ENCODE measurements at regions of chr1 and their contacts with region 1.

Region 1: GRCh38 chr1:2586154-2587070 is at the start of gene PRXL2B:
- DNase-seq: peak; percentile 99
- H3K4me3 Mint-ChIP-seq: peak within 1 kb of the TSS; percentile 83
- H3K27ac Mint-ChIP-seq: peak within 1 kb of the TSS; percentile 92
- H3K4me1 Mint-ChIP-seq: peaks cover 39% of the 10 kb centered on the region
- H3K27me3 Mint-ChIP-seq: no peaks in the 10 kb centered on the region
- total RNA-seq, gene PRXL2B: 28.2 to 34.6 TPM

Region 2: GRCh38 chr1:2412519-2413233 is 173.7 kb before region 1 on chr1 and contains the start of gene PEX10:
- CTCF ChIA-PET with region 1: interaction called, 5 read pairs
- POLR2A ChIA-PET with region 1: interaction called, 7 read pairs
- intact Hi-C with region 1: loop called (anchors 2 kb)
- DNase-seq: peak; percentile 99
- H3K4me3 Mint-ChIP-seq: peak within 1 kb of the TSS; percentile 88
- H3K27ac Mint-ChIP-seq: peak within 1 kb of the TSS; percentile 82
- H3K4me1 Mint-ChIP-seq: peaks cover 34% of the 10 kb centered on the region
- H3K27me3 Mint-ChIP-seq: no peaks in the 10 kb centered on the region
- total RNA-seq, gene PEX10: 14.8 to 15.4 TPM

Region 3: GRCh38 chr1:2556277-2556677 is 30.1 kb before region 1 on chr1 and contains the start of gene TNFRSF14:
- CTCF ChIA-PET with region 1: interaction called, 16 read pairs
- POLR2A ChIA-PET with region 1: interaction called, 67 read pairs
- intact Hi-C with region 1: loop called (anchors 1 kb)
- DNase-seq: peak; percentile 81
- H3K4me3 Mint-ChIP-seq: peak within 1 kb of the TSS; percentile 99
- H3K27ac Mint-ChIP-seq: peak within 1 kb of the TSS; percentile 99
- H3K4me1 Mint-ChIP-seq: peaks cover 31% of the 10 kb centered on the region
- H3K27me3 Mint-ChIP-seq: no peaks in the 10 kb centered on the region
- total RNA-seq, gene TNFRSF14: 145 to 152 TPM

Region 4: GRCh38 chr1:2575801-2576663 is 10.4 kb before region 1 on chr1:
- CTCF ChIA-PET with region 1: no interaction called
- POLR2A ChIA-PET with region 1: interaction called, 14 read pairs
- intact Hi-C with region 1: loop called (anchors 1 kb)
- DNase-seq: no peak
- H3K4me3 Mint-ChIP-seq: no peak overlapping the region
- H3K27ac Mint-ChIP-seq: peak overlapping the region; percentile 97
- H3K4me1 Mint-ChIP-seq: peaks cover 39% of the 10 kb centered on the region
- H3K27me3 Mint-ChIP-seq: no peaks in the 10 kb centered on the region

Measured in activated CD4-positive, alpha-beta memory T cell treated with anti-CD3 and anti-CD28 coated beads for 36 hours (primary cell).